ENCODE measurements at regions of chr17 and their contacts with region 1.

Region 1: DNA sequence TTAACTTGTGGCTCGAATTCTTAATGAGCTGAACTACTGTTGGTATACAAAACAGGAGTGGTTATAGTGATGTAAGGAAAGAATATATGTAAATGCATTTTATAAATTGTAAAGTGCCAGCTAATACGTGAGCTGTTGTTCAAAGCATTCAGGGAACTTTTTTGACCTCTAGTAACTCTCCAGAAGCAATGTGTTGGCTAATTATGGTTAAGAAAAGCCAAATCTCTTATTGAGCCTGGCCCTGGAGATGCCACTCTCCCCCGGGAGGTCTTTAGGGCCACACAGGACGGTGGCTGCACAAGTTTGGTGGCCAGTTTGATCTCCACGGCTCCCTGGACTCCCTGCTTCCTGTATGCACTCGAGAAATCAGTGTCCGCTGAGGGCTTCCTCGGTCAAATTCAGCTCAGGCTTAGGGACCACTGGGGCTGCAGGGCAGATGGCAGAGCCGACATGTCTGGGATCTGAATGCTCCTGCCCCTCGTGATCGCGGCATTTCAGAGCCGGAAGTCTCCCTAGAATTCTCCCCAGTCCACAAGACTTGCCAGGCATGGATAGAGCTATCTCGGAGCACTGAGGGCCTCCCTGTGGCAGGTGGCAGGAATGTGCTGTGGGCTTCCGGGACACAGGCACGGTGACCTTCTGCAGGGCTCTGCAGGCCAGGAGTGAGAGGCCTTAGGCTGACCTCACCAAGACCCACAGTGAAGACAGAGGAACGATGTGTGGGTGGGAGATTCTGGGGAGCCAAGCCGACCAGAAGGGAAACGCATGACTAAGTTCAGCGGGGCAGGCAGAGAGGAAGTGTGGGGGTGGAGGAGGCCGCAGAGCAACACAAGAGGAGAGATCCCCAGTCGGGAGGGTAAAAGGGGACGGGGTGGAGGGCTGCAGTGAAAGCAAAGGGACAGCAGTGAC is 18.6 kb upstream of the PITPNM3 start:
- DNase-seq: peak; percentile 86

Region 2: DNA sequence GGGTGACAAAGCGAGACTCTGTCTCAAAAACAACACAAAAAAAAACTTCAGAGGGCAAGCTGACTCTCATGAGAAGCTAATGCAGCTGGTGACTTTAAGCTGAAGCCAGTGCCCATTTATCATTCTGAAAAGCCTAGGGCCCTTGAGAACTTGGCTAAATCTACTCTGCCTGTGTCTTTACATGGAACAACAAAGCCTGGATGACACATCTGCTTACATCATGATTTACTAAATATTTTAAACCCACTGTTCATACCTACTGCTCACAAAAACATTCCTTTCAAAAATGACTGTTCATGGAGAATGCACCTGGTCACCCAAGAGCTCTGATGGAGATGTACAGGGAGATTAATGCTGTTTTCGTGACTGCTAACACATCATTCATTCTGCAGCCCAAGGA is 414.8 kb after region 1 on chr17:
- intact Hi-C with region 1: loop called in 1 of 2 experiments (anchors 5 kb)
- DNase-seq: no peak